Heart left ventricle (tissue), 16 donors: ENCODE measurements at regions of chr10 and their contacts with region 1.

Region 1: DNA sequence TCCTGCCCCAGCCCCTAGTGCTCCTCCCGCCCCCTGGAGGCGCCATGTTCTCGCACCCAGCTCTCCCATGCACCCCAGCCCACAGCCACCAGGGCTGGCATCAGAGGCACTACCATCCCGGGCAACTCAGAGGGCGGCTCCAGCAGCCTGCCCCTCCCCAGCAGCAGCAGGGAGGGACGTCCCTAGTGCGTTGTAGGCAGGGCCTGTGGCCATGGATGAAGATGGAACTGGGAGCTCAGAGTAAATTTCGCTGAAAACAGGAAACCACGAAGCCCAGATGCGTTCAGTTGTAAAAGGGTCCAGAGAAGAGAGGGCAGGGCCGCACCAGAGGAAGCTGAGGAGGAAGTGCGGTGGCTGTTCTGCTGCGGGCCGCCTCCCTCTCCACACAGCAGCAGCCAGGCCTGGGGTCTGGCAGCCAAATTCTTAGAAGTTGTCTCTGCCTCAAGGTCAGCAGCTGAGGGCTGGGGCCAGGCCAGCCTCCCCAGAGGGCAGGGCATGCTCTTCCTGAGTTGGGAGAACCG is 24.6 kb downstream of the VSIR start:
- DNase-seq: peak; percentile 81 to 91 (median 84)
- ATAC-seq: peak; percentile 54 to 75 (median 70)
- H3K4me3 ChIP-seq: peak overlapping the region in 2 of 12 donors; percentile 8 to 10
- H3K27ac ChIP-seq: peak overlapping the region; percentile 76 to 96 (median 86)
- H3K4me1 ChIP-seq: peaks cover 35 to 99% (median 56%) of the 10 kb centered on the region in 12 donors
- H3K27me3 ChIP-seq: no peaks in the 10 kb centered on the region
- CTCF ChIP-seq: peak in 4 of 12 donors; percentile 6 to 25 (median 14)
- POLR2A ChIP-seq: peak in 1 of 2 donors; percentile 22

Region 2: DNA sequence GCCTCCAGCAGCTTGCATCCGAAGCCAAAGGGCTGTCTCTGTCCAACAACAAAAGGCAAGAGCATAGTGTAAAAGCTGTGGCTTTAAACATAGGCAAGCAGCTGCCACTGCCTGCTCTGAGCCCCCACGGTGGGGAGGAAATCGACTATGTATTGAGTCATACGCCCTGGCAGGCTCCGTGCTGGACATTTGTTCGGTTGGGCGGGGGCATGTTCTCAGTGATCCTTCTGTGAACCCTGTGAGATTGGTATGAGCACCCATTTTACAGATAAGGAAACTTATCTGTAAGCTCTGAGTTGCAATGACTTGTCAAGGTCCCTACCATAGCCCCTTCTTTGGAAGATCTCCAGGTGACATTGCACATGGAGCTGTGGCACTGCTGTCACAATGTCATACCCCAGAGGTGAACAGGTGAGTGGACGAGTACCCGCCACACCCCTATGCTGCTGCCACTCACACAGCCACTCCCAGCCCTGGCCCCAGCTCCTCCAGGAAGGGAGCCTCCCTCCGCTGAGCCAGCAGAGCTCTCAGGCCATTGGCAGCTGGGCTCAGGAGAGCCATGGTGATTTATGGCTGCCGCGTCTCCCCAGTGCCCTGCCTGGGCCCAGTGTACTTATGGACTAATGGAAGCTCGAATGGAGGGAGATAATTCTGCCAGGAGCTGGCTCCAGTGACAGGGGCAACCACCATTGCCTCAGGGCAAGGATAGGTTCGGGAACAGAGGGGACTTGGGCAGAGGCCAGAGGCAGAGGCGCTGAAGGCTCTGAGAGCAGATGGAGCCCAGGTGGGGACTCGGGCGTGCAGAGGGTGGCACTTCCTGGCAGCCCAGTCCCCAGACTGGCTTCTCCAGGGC is 492.7 kb before region 1 on chr10:
- intact Hi-C with region 1: no loop called
- DNase-seq: peak in 4 of 5 donors; percentile 67 to 81 (median 73)
- ATAC-seq: peak; percentile 26 to 62 (median 53)
- H3K4me3 ChIP-seq: no peak overlapping the region
- H3K27ac ChIP-seq: peak overlapping the region in 8 of 12 donors; percentile 12 to 71 (median 54)
- H3K4me1 ChIP-seq: peaks cover 17 to 97% (median 83%) of the 10 kb centered on the region in 12 donors
- H3K27me3 ChIP-seq: no peaks in the 10 kb centered on the region
- CTCF ChIP-seq: no peak
- POLR2A ChIP-seq: no peak

Region 3: DNA sequence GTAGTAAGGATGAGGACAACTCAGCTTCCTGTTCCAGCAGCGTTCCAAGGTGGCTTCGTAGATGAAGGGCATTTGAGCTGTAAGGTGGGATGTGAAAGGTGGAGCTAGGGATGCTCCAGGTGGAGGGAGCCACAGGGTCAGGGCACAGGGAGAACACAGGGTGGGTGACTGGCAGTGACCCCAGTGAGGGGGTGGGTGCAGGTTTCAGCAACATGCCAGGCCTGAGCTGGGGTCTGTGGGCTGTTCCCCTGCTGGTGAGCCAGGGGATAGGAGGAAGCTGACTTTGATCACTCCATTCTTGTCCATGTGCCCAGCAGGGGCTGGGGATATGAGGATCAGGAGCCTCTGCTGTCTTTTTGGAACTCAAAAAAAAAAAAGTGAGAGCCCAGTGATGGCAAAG is 318.8 kb before region 1 on chr10:
- intact Hi-C with region 1: no loop called
- DNase-seq: peak in 1 of 5 donors; percentile 7
- ATAC-seq: no peak
- H3K4me3 ChIP-seq: no peak overlapping the region
- H3K27ac ChIP-seq: no peak overlapping the region
- H3K4me1 ChIP-seq: peaks cover 0 to 13% (median 2%) of the 10 kb centered on the region in 12 donors
- H3K27me3 ChIP-seq: no peaks in the 10 kb centered on the region
- CTCF ChIP-seq: no peak
- POLR2A ChIP-seq: no peak

Region 4: DNA sequence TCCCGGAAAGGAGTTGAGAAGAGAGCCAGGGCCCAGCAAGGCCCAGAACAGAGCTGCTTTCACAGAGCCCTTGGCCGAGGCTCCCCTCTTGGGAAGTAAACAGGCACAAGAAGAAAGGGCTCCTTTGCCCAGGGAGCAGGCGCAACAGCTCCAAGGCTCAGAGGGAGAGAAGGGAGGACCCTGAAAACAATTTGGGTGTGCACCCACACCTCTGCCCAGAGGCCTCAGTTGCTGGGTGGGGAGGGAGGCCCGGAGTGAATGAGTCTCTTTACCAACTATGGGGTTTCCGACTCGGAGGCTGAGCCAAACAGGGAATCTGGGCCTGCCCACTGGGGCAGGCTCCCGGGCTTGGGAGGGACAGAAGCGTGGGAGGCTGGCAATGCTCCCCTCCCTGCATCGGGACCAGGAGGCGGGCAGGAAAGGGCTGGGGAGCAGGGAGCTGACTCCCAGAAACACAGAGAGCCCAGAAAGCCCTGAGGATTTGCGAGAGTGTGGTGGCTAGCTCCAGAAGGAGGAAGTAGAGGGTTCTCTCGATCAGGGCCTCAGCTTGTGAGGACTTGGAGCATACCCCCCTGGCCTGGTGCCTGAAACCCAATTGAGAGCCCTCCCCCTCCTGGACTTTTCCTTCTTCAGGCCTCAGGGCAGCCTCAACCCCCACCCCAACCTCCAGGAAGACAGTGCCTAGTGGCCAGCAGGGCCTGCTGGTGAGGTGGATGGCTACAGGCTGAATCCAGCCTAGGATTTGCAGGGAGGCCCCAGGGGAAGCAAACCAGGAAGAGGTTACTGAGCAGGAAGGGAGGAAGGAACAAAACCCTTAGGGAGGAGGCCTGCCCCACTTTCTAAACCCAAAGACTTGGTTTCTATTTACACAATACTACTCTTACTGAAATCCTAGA is 35.3 kb before region 1 on chr10:
- intact Hi-C with region 1: loop called in 2 of 10 experiments (anchors 1 to 5 kb)
- DNase-seq: peak; percentile 84 to 91 (median 88)
- ATAC-seq: peak; percentile 65 to 87 (median 84)
- H3K4me3 ChIP-seq: peak overlapping the region in 3 of 12 donors; percentile 1 to 23 (median 5)
- H3K27ac ChIP-seq: peak overlapping the region; percentile 82 to 96 (median 91)
- H3K4me1 ChIP-seq: peaks cover 8 to 65% (median 46%) of the 10 kb centered on the region in 12 donors
- H3K27me3 ChIP-seq: no peaks in the 10 kb centered on the region
- CTCF ChIP-seq: peak in 4 of 12 donors; percentile 17 to 28 (median 22)
- POLR2A ChIP-seq: peak in 1 of 2 donors; percentile 36

Region 5: DNA sequence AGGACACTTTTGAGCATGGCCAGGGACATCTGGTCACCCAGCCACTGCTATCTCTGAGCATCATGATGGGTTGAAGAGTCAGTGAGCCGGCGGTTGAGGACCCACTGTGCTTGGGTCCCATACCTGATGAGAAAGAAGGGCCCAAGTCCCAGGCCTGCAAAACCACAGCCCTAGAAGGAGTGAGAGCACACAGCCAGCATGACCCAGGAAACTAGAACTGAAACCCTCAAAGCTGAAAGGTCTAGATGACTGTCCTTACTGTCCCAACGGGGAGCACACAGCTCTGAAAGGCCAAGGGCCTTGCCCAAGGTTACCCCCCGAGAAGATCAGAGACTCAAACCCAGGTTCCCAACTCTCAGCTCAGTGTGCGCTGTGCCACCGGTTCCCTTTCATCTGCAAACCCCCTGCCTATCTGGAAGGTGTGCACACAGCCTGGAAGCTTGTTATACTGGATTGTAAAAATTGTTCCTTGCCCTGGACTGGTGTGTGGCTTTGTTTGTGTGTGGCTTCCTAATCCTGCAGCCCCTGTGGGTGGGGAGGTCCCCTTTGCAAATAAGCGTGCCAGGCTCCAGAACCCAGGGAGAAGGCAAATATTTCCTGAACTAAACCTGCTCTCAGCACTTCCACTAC is 125.0 kb after region 1 on chr10:
- intact Hi-C with region 1: no loop called
- DNase-seq: no peak
- ATAC-seq: peak in 1 of 4 donors; percentile 21
- H3K4me3 ChIP-seq: no peak overlapping the region
- H3K27ac ChIP-seq: no peak overlapping the region
- H3K4me1 ChIP-seq: peaks cover 0 to 24% (median 0%) of the 10 kb centered on the region in 12 donors
- H3K27me3 ChIP-seq: no peaks in the 10 kb centered on the region
- CTCF ChIP-seq: no peak
- POLR2A ChIP-seq: no peak